ENCODE measurements at regions of chr3 and their contacts with region 1.

Region 1: GRCh38 chr3:140972833-140973232 is 31.2 kb downstream of the SLC25A36 start:
- DNase-seq: no peak
- H3K4me3 ChIP-seq: no peak overlapping the region
- H3K27ac ChIP-seq: no peak overlapping the region
- H3K4me1 ChIP-seq: no peaks in the 10 kb centered on the region
- H3K27me3 ChIP-seq: no peaks in the 10 kb centered on the region
- CTCF ChIP-seq: no peak

Region 2: DNA sequence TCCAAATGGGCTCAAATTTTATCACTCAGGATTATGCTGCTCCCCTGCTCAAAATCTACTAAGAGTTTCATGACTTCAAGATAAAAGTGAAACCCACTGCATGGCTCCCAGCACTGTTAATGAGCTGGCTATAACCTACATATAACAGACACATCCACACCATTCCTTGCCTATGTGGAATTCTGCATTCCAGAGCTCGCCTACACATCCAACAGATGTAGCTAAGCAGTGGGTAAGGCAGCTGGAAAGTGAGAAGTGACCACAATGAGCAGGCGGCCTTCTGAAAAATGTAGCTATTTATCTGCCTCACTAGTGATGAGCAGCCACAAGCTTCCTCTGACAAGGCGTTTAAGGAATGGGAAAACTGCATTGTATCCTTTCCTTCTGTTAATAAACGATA is 387.0 kb before region 1 on chr3:
- intact Hi-C with region 1: no loop called
- DNase-seq: no peak
- H3K4me3 ChIP-seq: no peak overlapping the region
- H3K27ac ChIP-seq: no peak overlapping the region
- H3K4me1 ChIP-seq: no peaks in the 10 kb centered on the region
- H3K27me3 ChIP-seq: no peaks in the 10 kb centered on the region
- CTCF ChIP-seq: no peak

Region 3: DNA sequence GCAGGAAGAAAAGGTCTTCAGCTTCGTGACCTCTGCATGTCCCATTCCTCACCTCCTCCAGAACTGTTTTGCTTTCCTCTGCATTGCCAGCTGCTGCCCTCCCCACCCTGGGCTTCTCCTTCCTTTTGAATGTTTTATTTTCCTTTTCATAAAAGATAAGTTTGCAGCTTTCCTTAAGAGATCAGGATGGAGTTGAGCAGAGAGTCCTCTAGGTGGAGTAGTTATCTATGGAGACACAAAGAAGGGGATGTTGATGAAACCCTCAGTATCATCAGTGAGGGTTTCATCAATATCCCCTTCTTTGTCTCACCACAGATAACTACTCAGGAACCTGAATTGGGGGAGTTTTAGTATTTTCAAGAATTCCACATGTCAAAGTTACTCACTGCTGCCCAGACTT is 50.2 kb before region 1 on chr3:
- intact Hi-C with region 1: loop called (anchors 10 kb)
- DNase-seq: no peak
- H3K4me3 ChIP-seq: no peak overlapping the region
- H3K27ac ChIP-seq: no peak overlapping the region
- H3K4me1 ChIP-seq: no peaks in the 10 kb centered on the region
- H3K27me3 ChIP-seq: no peaks in the 10 kb centered on the region
- CTCF ChIP-seq: no peak

Measured in colonic mucosa (tissue), 4 donors.